ENCODE measurements at regions of chr13 and their contacts with region 1.

Region 1: DNA sequence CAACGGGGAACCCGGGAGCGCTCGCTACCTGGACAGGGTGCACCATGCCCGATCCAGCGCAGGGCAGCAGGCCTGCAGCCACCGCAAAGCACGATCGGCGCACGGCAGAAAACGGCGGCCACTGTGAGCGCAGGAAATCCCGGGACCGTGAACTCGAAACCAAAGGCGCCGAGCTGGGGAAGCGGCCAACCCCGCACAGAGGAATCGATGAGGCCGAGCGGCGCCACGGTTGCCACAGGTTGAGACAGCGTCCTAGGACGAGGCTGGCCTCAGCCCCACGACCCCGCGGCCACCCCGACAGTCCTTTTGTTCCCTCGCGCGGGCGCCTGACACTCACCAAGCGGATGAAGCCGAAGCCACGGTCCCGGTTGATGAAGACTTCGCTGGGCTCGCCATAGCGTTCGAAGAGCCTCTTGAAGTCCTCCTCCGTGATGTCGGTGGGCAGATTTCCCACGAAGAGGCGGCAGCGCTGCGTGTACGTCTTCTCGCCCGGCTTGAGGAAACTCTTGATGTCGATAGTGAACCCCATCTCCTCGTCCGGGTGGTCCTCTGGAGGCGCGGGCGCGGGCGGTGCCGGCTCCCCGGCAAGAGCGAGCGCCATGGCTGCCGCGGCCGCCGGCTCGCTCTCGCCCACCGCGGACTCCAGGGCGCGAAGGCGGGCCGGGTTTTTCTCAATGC is 557 bp downstream of the PSPC1 start:
- ATAC-seq: peak; percentile 64 to 78 (median 71)
- H3K4me3 ChIP-seq: peak overlapping the region; percentile 59 to 87 (median 64)
- H3K27ac ChIP-seq: peak overlapping the region; percentile 89 to 91
- H3K4me1 ChIP-seq: peaks cover 6 to 8% of the 10 kb centered on the region in 2 donors

Region 2: DNA sequence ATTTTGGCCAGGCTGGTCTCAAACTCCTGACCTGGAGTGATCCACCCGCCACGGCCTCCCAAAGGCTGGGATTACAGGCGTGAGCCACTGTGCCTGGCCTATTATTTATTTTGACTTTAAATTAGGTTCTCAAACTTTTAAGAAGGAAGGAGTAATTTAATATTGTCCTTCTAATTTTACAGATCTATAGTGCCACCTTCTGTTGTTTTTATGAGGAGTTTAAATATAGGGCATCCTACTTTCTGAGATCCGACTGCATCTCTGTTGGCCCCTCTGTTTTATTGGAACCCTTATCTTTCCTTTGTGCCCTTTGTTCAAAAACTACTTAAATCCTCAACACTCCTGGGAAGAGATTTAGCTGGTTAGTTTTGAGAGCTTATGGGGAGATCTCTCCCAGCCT is 106.6 kb after region 1 on chr13:
- in situ Hi-C with region 1: loop called in 1 of 9 experiments (anchors 25 kb)
- ATAC-seq: peak in 2 of 8 experiments; percentile 18 to 40
- H3K4me3 ChIP-seq: no peak overlapping the region
- H3K27ac ChIP-seq: no peak overlapping the region
- H3K4me1 ChIP-seq: no peaks in the 10 kb centered on the region

Measured in motor neuron (in vitro differentiated cells).